Heart left ventricle (tissue), 16 donors: ENCODE measurements at regions of chr7 and their contacts with region 1.

Region 1: GRCh38 chr7:73351447-73352167 is 23.6 kb downstream of the FKBP6 start:
- DNase-seq: no peak
- ATAC-seq: peak in 1 of 4 donors; percentile 13
- H3K4me3 ChIP-seq: no peak overlapping the region
- H3K27ac ChIP-seq: no peak overlapping the region
- H3K4me1 ChIP-seq: peaks cover 0 to 4% (median 0%) of the 10 kb centered on the region in 12 donors
- H3K27me3 ChIP-seq: no peaks in the 10 kb centered on the region
- CTCF ChIP-seq: no peak
- POLR2A ChIP-seq: no peak

Region 2: GRCh38 chr7:73433924-73434700 is 82.5 kb after region 1 on chr7:
- intact Hi-C with region 1: loop called in 1 of 10 experiments (anchors 5 kb)
- DNase-seq: no peak
- ATAC-seq: peak in 1 of 4 donors; percentile 24
- H3K4me3 ChIP-seq: peak overlapping the region in 10 of 12 donors; percentile 25 to 57 (median 40)
- H3K27ac ChIP-seq: no peak overlapping the region
- H3K4me1 ChIP-seq: peaks cover 0 to 18% (median 2%) of the 10 kb centered on the region in 12 donors
- H3K27me3 ChIP-seq: peaks cover 0 to 34% (median 12%) of the 10 kb centered on the region in 9 donors
- CTCF ChIP-seq: no peak
- POLR2A ChIP-seq: no peak